ENCODE measurements at regions of chr10 and their contacts with region 1.

Region 1: DNA sequence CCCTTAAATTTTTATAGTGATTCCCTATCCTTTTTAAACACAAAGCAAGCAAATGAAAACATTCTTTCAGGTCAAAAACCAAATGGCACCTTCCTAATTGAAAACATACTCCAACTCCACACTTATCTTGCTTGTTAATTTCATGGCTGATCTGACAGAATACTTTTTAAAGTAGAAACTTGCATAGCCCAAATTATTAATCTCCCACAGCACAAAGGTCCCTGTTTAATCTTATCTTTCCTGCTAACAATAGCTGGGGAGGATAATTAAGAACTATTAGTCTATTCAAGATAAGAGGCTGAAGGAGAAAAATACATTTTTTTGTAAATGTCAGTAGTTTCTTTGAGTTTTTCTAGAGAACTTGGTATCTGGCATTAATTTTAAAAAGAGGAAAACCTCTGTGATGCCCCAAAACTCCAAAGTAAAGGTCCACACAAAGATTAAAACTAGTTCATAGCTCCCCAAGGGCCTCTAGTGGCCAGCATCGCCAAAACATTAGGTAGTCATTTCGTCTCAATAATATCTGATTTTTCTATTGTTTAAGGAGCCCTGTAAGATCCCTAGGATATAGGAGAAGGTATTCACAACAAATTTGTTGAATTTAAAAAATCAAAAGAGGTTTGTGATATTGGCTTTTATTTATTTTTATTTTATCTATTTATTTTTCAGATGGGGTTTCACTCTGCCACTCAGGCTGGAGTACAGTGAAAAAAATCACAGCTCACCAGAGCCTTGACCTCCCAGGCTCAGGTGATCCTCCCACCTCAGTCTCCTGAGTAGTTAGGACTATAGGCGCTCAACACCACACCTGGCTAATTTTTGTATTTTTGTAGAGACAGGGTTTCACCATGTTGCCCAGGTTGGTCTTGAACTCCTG is 14.7 kb downstream of the CDNF start:
- DNase-seq: no peak
- H3K4me3 ChIP-seq: no peak overlapping the region
- H3K27ac ChIP-seq: no peak overlapping the region
- H3K4me1 ChIP-seq: peaks cover 0 to 15% (median 7%) of the 10 kb centered on the region in 6 donors
- H3K27me3 ChIP-seq: no peaks in the 10 kb centered on the region
- CTCF ChIP-seq: peak in 10 of 11 experiments; percentile 34 to 66 (median 53)
- POLR2A ChIP-seq: no peak

Region 2: DNA sequence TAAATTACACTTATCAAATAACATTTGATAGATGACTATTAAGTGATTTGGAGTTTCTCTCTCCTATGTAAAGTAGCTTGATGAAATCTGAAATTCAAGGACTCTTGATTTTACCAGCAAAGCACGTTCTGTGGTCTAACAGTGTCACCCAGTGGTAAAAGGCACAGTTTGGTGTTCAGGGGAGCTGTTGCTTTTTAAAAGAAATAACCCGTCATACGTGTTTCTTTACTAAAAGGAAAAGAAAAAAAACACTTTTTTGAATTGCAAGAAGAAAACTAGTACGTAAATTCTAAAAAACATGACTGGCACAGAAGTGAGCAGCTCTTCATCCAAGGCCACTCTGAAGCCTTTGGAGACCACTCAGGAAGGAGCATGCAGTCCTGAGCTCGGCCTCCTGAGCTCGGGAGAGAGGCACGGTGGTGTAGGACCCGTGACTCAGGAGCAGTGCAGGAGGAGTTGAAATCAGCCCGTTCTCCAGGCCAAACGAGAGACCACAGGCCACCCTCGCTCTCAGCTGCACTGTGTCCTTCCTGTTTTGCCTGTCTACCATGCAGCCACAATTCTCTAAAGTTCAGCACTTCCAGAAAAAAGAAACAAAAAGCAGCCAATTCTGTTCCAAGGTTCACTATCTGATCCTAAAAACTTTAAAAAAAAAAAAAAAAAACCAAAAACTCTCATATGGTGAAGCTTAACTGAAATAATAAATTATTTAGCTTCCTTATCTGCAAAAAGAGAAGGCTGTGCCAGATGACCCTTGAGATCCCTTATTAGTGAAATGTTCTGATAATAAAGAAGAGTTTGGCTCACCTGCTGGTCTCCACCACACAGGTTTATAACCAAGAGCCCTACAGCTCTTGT is 279.8 kb before region 1 on chr10:
- intact Hi-C with region 1: loop called (anchors 5 kb)
- DNase-seq: peak; percentile 85
- H3K4me3 ChIP-seq: peak overlapping the region in 3 of 8 donors; percentile 2 to 43 (median 6)
- H3K27ac ChIP-seq: peak overlapping the region; percentile 40 to 93 (median 68)
- H3K4me1 ChIP-seq: peaks cover 15 to 100% (median 52%) of the 10 kb centered on the region in 6 donors
- H3K27me3 ChIP-seq: no peaks in the 10 kb centered on the region
- CTCF ChIP-seq: peak in 9 of 11 experiments; percentile 16 to 63 (median 40)
- POLR2A ChIP-seq: no peak

Measured in spleen (tissue), 13 donors.